ENCODE measurements at regions of chr1 and their contacts with region 1.

Region 1: GRCh38 chr1:172308577-172308976 is 111.9 kb upstream of the C1orf105 start:
- DNase-seq: no peak
- H3K4me3 ChIP-seq: no peak overlapping the region
- H3K27ac ChIP-seq: no peak overlapping the region
- H3K4me1 ChIP-seq: peaks cover 0 to 4% (median 2%) of the 10 kb centered on the region in 4 donors
- H3K27me3 ChIP-seq: no peaks in the 10 kb centered on the region
- CTCF ChIP-seq: no peak
- EP300 ChIP-seq: no peak
- POLR2A ChIP-seq: no peak

Region 2: DNA sequence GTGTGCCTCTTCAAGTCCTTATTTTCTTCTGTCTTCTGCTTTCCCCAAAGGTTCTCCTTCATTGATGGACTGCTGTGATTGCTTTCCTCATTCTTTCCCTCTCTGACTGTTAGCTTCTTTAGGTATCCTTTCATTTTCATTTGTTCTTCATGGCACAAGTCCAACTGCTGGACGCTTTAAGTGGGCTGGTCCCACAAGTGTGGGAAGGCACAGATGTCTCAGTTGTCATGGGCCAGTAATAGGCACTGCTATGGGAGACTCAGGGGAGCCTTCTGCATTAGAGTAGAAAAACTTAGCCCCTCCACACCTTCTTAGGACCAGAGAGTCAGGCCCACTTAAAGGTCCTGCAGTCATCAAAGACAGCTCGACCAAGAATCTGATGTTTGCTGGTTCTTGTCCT is 10.4 kb before region 1 on chr1:
- intact Hi-C with region 1: loop called (anchors 1 kb)
- DNase-seq: no peak
- H3K4me3 ChIP-seq: no peak overlapping the region
- H3K27ac ChIP-seq: no peak overlapping the region
- H3K4me1 ChIP-seq: peaks cover 0 to 7% (median 3%) of the 10 kb centered on the region in 4 donors
- H3K27me3 ChIP-seq: no peaks in the 10 kb centered on the region
- CTCF ChIP-seq: no peak
- EP300 ChIP-seq: no peak
- POLR2A ChIP-seq: no peak

Measured in esophagus muscularis mucosa (tissue), 4 donors.